ENCODE measurements at regions of chr10 and their contacts with region 1.

Region 1: DNA sequence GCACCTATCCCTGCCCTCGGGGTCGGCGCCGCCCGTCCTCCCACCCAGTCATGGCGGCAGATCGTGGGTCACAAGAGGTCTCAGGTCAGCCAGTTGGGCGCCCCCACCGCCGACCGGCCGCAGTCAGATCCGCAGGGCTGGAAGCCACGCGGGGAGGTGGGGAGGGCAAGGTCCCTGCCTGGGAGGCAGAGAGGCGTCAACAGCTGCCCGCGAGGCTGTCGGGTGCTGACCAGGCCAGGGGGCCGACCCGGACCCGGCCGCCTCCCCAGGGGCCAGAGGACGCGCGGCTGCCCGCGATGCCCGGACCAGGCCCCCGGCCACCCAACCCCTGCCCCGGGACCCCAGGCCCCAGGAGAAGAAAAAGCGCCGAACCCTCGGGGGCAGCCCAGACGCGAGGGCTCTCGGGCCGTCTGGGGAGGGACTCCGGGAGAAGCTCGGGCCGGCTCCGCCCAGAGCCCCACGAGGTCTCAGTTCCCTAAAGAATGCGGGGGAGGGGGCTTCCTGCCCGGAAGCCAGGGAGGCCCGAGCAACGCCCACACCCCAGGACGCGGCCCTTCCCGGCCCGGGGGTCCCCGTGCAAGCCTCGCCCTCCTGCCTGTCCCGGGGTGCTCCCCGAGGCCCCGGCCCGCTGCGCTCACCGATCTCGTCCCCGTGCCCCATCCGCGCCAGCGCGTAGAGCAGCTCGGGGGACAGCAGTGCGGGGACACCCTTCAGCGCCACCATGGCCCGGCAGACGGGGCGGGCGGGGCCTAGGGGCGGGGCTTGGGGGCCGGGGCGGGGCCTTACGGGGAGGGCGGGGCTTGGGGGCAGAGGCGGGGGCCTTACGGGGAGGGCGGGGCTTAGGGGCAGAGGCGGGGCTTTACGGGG is at the start of gene FUOM:
- DNase-seq: peak; percentile 66
- H3K4me3 Mint-ChIP-seq: peak within 1 kb of the TSS; percentile 78
- H3K27ac Mint-ChIP-seq: peak within 1 kb of the TSS; percentile 60
- H3K4me1 Mint-ChIP-seq: peaks cover 6% of the 10 kb centered on the region
- H3K27me3 Mint-ChIP-seq: no peaks in the 10 kb centered on the region
- total RNA-seq, gene FUOM: 44.0 and 45.7 TPM in 2 replicates

Region 2: DNA sequence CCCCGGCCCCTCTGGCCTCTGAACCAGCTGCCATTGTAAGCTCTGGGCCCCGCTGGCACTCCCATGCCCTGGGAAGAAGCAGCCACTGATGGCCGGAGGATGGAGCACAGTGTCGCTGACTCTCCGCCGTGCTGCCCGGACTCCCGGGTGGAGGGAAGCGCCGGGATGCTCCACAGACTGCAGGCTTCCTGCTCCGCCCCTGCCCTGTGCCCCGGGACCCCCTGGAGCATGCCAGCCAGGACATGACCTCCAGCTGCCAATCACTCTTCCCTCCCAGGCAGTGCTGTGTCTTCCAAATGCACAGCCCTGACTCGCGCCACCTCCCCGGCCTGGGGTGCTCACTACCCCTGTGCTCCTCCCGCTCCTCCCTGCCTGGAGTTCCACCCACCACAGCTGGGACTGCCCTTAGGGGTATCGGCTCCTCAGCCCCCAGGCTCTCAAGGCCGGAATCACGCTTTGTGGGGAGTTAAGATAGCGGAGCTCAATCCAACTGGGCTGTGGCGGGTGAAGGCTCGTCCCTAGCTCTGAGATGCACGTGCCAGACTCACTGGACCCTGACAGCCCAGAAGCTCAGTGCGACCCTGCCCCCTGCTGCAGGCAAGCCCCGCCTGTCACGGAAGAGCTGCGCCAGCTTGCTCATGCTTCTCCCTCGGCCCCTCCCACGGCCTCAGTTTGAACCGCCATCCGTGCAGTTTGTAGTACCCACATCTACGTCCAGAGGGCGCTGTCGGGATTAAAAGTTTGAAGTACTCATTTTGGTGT is 1903.7 kb before region 1 on chr10:
- intact Hi-C with region 1: no loop called
- DNase-seq: peak; percentile 59
- H3K4me3 Mint-ChIP-seq: no peak overlapping the region
- H3K27ac Mint-ChIP-seq: no peak overlapping the region
- H3K4me1 Mint-ChIP-seq: no peaks in the 10 kb centered on the region
- H3K27me3 Mint-ChIP-seq: peaks cover 13% of the 10 kb centered on the region

Region 3: GRCh38 chr10:133373104-133373624 is 15.6 kb after region 1 on chr10 and contains the start of gene ECHS1:
- intact Hi-C with region 1: loop called (anchors 1 kb)
- DNase-seq: peak; percentile 92
- H3K4me3 Mint-ChIP-seq: peak within 1 kb of the TSS; percentile 94
- H3K27ac Mint-ChIP-seq: peak within 1 kb of the TSS; percentile 86
- H3K4me1 Mint-ChIP-seq: peaks cover 9% of the 10 kb centered on the region
- H3K27me3 Mint-ChIP-seq: peaks cover 5% of the 10 kb centered on the region
- total RNA-seq, gene ECHS1: 74.2 and 74.8 TPM in 2 replicates

Region 4: GRCh38 chr10:133378251-133379096 is 21.0 kb after region 1 on chr10:
- intact Hi-C with region 1: loop called (anchors 1 kb)
- DNase-seq: peak; percentile 58
- H3K4me3 Mint-ChIP-seq: peak overlapping the region; percentile 69
- H3K27ac Mint-ChIP-seq: no peak overlapping the region
- H3K4me1 Mint-ChIP-seq: peaks cover 9% of the 10 kb centered on the region
- H3K27me3 Mint-ChIP-seq: peaks cover 5% of the 10 kb centered on the region

Measured in activated T-helper 2 cell treated with anti-CD3 and anti-CD28 coated beads, Interferon-gamma antibody, Interleukin-2, Interleukin-4, amounts not matched to agents 10 μg/mL and 5 μg/mL and 100 μg/mL, durations not matched to agents 14 hours and 24 hours and 36 hours (primary cell).